Activated CD8-positive, alpha-beta T cell treated with anti-CD3 and anti-CD28 coated beads for 36 hours (primary cell): ENCODE measurements at regions of chr6 and their contacts with region 1.

Region 1: GRCh38 chr6:149834513-149835481 is 29.4 kb downstream of the LRP11 start:
- DNase-seq: peak; percentile 82
- ATAC-seq: peak; percentile 76
- H3K4me3 Mint-ChIP-seq: no peak overlapping the region
- H3K27ac Mint-ChIP-seq: no peak overlapping the region
- H3K4me1 Mint-ChIP-seq: no peaks in the 10 kb centered on the region
- H3K27me3 Mint-ChIP-seq: peaks cover 2% of the 10 kb centered on the region
- CTCF ChIP-seq: peak; percentile 91

Region 2: DNA sequence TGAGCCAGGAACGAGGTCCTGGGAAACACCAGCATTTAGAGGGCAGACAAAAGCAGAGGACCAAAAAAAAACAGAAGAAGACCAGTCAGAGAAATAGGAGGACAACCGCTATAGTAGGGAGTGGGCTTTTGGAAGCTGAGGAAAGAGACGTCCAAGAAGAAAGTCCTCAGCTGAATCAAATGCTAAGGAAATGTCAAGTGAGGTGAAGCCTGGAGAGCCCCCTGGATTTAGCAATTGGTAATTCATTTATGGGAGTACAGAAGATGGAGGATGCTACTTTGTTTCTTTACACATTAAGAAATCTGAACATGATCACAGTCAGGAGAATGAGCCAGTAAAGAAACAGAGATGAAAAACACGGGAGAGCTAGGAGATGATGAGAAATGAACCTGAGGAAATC is 11.8 kb before region 1 on chr6:
- CTCF ChIA-PET with region 1: interaction called, 16 read pairs
- POLR2A ChIA-PET with region 1: no interaction called
- intact Hi-C with region 1: no loop called
- DNase-seq: no peak
- ATAC-seq: no peak
- H3K4me3 Mint-ChIP-seq: no peak overlapping the region
- H3K27ac Mint-ChIP-seq: no peak overlapping the region
- H3K4me1 Mint-ChIP-seq: no peaks in the 10 kb centered on the region
- H3K27me3 Mint-ChIP-seq: no peaks in the 10 kb centered on the region
- CTCF ChIP-seq: no peak

Region 3: GRCh38 chr6:149864578-149865535 is 30.1 kb after region 1 on chr6:
- CTCF ChIA-PET with region 1: interaction called, 11 read pairs
- POLR2A ChIA-PET with region 1: no interaction called
- intact Hi-C with region 1: no loop called
- DNase-seq: peak; percentile 51
- ATAC-seq: peak; percentile 17
- H3K4me3 Mint-ChIP-seq: peak overlapping the region; percentile 46
- H3K27ac Mint-ChIP-seq: no peak overlapping the region
- H3K4me1 Mint-ChIP-seq: peaks cover 7% of the 10 kb centered on the region
- H3K27me3 Mint-ChIP-seq: peaks cover 18% of the 10 kb centered on the region
- CTCF ChIP-seq: peak; percentile 73

Region 4: DNA sequence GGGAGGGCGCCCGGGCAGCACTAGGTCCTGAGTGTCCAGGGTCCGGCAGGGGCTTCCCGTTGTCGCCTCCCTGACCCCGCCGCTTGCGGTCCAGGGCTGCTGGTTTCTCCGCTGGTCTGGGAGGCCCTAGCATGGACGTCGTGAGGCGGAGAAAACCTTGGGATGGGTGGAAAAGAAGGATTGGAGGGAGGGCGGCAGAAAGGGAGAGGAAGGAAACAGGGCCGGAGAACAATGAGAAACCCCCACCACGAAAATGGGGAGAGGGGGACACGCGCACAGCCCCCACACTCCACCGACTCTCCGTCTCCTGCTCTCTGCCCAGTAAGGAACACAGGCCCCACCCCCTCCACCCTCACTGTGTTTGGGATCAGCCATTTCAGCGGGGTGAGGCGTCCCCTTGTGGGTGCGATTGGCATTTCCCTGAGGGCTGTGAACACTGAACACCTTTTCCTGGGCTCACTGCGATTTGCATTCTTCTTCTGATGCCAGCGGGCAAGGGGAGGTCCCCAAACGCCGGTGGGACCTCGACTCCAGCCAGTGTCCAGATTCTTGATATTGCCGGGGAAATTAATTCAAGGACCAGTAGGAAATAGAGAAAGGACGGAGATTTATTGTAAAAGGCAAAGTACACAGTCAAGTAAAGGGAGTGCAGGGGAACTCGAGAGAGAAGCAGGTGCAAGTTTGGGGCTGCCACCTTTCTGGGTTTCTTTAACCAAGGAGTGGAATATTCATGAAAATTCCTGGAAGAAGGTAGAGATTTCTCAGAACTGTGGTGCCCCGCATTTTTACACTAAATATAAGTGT is 91.4 kb after region 1 on chr6:
- CTCF ChIA-PET with region 1: interaction called, 9 read pairs
- POLR2A ChIA-PET with region 1: no interaction called
- intact Hi-C with region 1: loop called (anchors 2 kb)
- DNase-seq: peak; percentile 93
- ATAC-seq: peak; percentile 82
- H3K4me3 Mint-ChIP-seq: peak overlapping the region; percentile 32
- H3K27ac Mint-ChIP-seq: no peak overlapping the region
- H3K4me1 Mint-ChIP-seq: peaks cover 19% of the 10 kb centered on the region
- H3K27me3 Mint-ChIP-seq: peaks cover 84% of the 10 kb centered on the region
- CTCF ChIP-seq: peak; percentile 75

Region 5: GRCh38 chr6:149985481-149985937 is 150.7 kb after region 1 on chr6:
- CTCF ChIA-PET with region 1: no interaction called
- POLR2A ChIA-PET with region 1: no interaction called
- intact Hi-C with region 1: no loop called
- DNase-seq: no peak
- ATAC-seq: no peak
- H3K4me3 Mint-ChIP-seq: no peak overlapping the region
- H3K27ac Mint-ChIP-seq: no peak overlapping the region
- H3K4me1 Mint-ChIP-seq: peaks cover 14% of the 10 kb centered on the region
- H3K27me3 Mint-ChIP-seq: peaks cover 75% of the 10 kb centered on the region
- CTCF ChIP-seq: no peak

Region 6: GRCh38 chr6:150229775-150230561 is 395.2 kb after region 1 on chr6:
- CTCF ChIA-PET with region 1: no interaction called
- POLR2A ChIA-PET with region 1: no interaction called
- intact Hi-C with region 1: no loop called
- DNase-seq: peak; percentile 20
- ATAC-seq: no peak
- H3K4me3 Mint-ChIP-seq: no peak overlapping the region
- H3K27ac Mint-ChIP-seq: no peak overlapping the region
- H3K4me1 Mint-ChIP-seq: peaks cover 5% of the 10 kb centered on the region
- H3K27me3 Mint-ChIP-seq: peaks cover 19% of the 10 kb centered on the region
- CTCF ChIP-seq: no peak